HEK293 (cell line): ENCODE measurements at regions of chr5 and their contacts with region 1.

Region 1: GRCh38 chr5:36305571-36306326 is 4.0 kb upstream of the RANBP3L start:
- H3K4me3 ChIP-seq: no peak overlapping the region
- H3K27ac ChIP-seq: no peak overlapping the region
- H3K4me1 ChIP-seq: peaks cover 19% of the 10 kb centered on the region
- CTCF ChIP-seq: peak; percentile 87

Region 2: DNA sequence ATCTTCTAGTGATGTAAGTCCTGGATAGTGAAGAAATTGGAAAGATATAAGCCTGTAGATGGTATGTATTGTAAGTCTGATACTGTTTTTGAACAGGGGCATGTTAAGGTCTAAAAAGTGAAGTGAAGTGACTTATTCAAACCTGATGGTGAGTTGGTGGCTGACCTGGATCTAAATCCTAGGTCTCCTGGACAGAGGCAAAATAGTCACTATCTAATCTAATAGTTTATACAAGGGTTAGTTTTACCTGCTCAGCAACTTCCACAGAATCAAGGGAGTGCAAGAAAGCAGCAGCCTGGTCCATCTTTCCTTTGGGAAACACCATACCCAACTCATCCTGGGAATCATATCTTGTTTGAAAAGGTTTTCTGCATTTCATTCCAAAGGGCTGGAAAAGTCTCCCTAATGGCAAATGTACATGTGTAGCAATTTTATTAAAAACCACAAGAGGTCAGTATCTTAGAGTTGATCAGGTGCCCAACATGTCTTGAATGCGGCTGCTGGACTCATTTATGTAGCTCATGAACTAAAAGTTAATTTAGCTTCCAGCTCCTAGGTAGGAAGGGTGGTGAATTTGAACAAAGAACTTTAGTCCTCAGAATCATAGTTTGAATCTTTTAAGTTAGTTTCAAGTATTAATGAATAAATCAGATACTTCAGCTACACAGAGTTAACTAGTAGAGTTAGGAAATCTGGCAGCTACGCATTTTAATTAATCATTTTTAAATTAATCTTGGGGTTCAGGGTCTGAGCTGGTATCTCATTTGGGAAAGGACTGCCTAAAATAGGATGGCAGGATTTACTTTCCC is 127.8 kb before region 1 on chr5:
- CTCF ChIA-PET with region 1: interaction called, 38 read pairs
- POLR2A ChIA-PET with region 1: no interaction called
- H3K4me3 ChIP-seq: no peak overlapping the region
- H3K27ac ChIP-seq: no peak overlapping the region
- H3K4me1 ChIP-seq: no peaks in the 10 kb centered on the region
- CTCF ChIP-seq: peak; percentile 39; the same call in 1 of the 2 replicates

Region 3: DNA sequence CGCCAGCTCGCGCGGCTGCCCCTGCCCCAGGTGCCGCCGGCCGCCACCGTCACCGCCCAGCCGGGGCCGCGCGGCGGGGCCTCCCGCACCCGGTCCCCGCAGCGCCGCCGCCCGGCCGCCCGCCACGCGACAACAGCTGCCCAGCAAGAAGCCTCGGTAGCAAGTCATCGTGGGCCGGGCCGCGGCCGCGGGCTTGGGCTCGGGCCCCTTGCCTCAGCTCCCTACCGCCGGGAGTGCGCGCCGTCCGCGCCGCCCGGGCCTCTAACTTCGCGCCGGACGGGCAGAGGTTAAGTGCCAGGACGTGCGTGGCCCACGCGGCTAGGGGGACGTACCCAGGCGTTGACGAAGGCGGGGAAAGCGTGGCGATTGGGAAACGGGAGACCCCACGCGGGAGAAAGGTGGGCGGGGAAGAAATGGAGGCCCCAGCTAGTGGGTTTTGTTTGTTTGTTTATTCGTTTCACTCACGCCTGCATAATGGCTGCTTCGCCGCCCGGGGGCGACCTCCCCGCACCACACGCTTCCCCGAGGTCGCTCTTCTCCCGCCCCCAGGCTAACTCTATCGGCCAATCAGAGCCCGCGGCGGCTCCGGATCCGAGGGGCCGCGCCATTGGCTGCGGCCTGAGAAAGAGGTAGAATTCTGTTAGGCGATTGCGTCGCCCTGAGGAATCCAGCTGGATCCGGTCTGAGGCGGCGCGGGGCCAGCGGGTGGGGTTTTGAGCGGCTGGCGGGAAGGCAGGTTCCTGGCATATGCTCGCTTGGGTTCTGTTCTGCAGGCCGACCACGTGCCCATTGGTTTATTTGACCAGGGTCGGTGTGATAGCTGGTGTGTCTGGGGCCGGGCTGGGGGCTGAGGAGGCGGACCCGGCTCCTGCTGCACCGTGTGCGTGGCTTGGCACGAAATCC is 63.9 kb before region 1 on chr5 and contains the start of gene NADK2:
- CTCF ChIA-PET with region 1: interaction called, 21 read pairs
- POLR2A ChIA-PET with region 1: interaction called, 7 read pairs
- H3K4me3 ChIP-seq: peak within 1 kb of the TSS; percentile 89
- H3K27ac ChIP-seq: peak within 1 kb of the TSS; percentile 95
- H3K4me1 ChIP-seq: peaks cover 41% of the 10 kb centered on the region
- CTCF ChIP-seq: peak; percentile 99

Region 4: DNA sequence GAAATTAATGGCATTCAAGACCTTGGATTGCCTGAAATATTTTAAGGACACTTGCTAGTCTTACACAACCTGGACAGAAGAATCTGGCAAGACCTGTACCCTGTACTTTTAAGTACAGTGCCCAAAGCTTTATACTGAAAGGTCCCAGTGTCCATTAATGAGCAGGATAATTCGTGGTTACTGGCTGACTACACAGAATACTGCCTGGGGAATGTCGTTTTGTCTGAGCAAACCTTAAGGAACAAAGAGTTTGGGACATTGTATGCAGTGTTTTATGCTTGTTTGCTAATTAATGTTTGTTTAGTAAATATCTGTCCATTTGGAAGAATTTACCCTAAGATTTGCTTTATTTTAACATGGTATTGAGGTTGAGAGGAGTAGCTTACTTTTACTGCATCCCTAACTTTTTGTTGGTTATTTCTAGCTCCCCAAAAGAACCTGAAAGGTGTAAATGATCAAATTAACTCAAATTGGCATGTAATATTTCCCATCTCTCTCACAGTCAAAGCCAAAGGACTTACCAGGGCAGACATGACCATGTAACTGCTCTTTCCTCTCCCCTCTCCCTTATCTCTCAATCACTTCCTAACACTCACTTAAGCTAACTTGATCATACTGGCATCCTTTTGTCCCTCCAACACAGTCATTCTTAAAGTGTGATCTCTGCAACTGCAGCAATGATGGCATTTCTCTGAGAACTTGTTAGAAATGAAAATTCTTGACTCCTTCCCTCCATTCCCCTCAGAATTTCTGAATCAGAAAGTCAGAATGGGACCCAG is 19.7 kb before region 1 on chr5:
- CTCF ChIA-PET with region 1: interaction called, 11 read pairs
- POLR2A ChIA-PET with region 1: no interaction called
- H3K4me3 ChIP-seq: no peak overlapping the region
- H3K27ac ChIP-seq: no peak overlapping the region
- H3K4me1 ChIP-seq: no peaks in the 10 kb centered on the region
- CTCF ChIP-seq: no peak

Region 5: DNA sequence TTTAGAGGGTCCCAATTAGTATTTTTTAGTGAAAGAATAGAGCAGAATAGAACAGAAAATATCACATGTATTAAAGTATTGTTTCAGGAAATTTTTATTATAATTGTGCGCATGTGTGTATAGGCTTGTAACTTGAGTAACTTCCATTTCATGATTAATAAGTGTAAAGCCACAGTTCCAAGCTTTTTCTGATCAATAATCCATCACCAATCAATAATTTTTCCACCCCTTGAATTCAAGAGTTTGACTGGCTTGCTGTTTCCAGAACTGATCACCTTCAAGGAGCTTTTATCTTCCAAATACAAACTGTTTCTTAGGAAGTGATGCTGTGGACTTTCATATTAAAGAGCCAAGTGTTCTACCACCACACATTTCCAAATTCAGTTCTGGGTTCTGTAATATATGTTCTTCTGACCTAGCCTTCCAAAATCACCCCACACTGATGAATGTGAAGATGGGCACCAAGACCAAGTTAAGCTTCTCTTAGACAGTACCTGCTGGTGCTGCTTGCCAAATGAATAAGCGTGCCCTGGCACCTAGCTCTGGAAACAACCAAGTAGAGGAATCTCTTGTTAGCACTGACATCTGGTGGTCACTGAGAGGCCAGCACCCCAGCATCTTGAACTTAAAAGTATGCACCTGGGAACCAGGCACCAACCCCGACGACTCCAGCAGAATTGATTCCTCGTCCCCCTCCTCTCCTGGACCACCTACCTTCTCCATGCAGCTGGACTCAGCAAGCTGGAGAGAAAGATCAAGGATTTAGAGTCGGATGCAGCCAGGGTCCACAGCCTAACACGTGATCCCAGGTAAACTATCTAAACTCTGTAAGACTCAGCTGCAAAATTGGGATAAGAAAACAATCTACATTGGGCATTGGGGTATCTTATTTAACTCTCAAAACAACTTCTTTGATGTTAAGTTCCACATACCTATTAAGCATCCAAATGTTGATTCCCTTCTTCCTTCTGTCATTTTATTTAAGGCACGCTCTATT is 390.2 kb after region 1 on chr5:
- CTCF ChIA-PET with region 1: interaction called, 10 read pairs
- POLR2A ChIA-PET with region 1: no interaction called
- H3K4me3 ChIP-seq: no peak overlapping the region
- H3K27ac ChIP-seq: no peak overlapping the region
- H3K4me1 ChIP-seq: no peaks in the 10 kb centered on the region
- CTCF ChIP-seq: peak; percentile 68